ENCODE measurements at regions of chr2 and their contacts with region 1.

Region 1: DNA sequence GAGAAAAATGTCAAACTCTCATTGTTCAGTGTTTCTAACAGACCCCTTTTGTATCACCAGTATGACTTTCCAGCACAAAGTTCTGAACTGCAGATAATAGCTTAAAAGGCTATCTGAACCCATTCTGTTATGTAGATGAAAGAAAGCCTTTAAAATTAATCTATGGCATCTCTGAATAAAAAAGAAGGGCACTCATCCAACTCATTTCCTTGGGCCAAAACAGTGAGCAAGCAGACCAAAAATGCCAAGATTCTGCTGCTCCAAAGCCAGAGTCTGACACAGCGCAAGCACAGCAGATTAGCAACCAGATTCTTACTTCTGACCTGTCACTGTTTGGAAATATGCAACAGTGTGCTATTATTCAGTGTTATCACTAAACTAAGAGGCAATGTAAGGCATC is 22.6 kb upstream of the ITGA6 start:
- DNase-seq: no peak
- ATAC-seq: no peak

Region 2: DNA sequence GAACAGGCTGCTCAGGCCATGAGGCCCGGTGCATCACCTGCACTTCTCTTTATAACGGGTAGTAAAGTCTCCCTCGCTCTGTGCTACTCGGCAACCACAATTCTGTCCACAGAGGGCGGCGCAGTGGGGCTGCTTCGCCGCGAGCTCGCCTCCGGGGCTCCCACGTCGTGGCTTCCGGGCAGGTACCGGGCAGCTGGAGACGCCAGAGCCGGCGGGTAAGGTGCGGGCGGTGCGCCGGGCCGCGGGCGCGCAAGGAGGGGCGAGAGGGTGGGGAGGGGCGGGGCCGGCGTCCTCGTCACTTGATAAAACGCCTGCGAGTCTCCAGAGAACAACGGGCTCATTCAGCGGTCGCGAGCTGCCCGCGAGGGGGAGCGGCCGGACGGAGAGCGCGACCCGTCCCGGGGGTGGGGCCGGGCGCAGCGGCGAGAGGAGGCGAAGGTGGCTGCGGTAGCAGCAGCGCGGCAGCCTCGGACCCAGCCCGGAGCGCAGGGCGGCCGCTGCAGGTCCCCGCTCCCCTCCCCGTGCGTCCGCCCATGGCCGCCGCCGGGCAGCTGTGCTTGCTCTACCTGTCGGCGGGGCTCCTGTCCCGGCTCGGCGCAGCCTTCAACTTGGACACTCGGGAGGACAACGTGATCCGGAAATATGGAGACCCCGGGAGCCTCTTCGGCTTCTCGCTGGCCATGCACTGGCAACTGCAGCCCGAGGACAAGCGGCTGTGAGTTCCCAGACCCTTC is 22.6 kb after region 1 on chr2 and contains the start of gene ITGA6:
- intact Hi-C with region 1: loop called (anchors 1 kb)
- DNase-seq: peak; percentile 85
- ATAC-seq: peak; percentile 84
- total RNA-seq, gene ITGA6: 44.7 TPM

Measured in Right ventricle myocardium inferior (tissue), 1 donor.